AG04449 (cell line): ENCODE measurements at regions of chr6 and their contacts with region 1.

Region 1: GRCh38 chr6:127302728-127303660 is 36.3 kb downstream of the RNF146 start:
- DNase-seq: no peak
- H3K4me3 ChIP-seq: no peak overlapping the region
- CTCF ChIP-seq: peak; percentile 53

Region 2: DNA sequence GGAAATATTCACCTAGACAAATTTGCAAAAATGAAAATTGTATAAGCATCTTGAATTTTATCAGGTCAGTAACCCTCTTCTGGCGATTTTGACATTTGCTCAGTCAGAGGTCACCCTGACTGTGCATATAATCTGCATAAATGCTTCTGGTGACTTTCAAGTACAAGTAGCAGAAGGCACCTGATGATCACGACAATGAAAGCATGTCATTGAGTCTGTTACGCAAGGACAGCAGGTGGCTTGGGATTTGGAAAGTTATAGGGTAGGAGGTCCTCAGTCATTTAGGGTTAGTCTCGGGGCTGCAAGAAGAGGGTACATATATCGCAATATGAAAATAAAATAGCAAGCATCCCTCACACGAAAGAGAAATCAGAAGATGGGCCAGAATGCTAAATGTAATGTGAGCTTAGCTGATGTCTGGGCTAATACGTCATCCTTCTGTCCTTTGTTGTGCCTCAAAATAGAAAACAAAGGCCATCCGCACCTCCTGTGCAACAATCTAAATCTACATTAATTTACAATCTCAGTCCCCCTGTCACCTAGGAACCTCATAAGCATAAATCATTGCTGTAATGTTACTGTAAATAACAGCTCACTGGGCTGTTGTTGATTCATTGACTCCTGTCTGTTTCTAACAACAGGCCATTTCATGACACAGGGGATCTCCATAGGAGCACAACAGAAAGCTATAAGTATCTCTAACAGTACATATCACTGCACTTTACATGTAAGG is 339.8 kb before region 1 on chr6:
- CTCF ChIA-PET with region 1: no interaction called
- POLR2A ChIA-PET with region 1: no interaction called
- DNase-seq: no peak
- H3K4me3 ChIP-seq: no peak overlapping the region
- CTCF ChIP-seq: no peak

Region 3: GRCh38 chr6:127317388-127318128 is 14.6 kb after region 1 on chr6:
- CTCF ChIA-PET with region 1: interaction called, 34 read pairs
- POLR2A ChIA-PET with region 1: no interaction called
- DNase-seq: no peak
- H3K4me3 ChIP-seq: no peak overlapping the region
- CTCF ChIP-seq: no peak

Region 4: DNA sequence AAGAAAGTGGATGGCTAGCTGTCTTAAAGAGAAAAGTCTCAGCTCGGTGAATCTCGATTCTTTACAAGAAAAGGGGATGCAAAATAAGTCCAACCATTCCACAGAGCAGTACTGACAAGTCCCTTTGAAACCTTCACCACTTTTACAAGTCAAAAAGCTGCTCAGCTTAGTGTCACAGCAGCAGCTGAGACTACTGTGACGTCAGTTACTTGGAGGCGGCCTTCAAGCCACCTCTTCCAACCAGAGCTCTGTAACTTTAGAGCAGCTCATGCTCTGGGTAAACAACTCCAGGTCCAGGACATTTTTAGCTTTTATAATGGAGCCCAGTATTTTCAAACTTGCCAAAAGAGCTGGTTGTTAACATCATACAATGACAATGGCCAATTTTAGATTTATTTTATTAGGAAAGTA is 156.2 kb after region 1 on chr6 and contains the start of gene KIAA0408:
- CTCF ChIA-PET with region 1: interaction called, 22 read pairs
- POLR2A ChIA-PET with region 1: no interaction called
- DNase-seq: peak; percentile 36
- H3K4me3 ChIP-seq: peak within 1 kb of the TSS; percentile 9
- CTCF ChIP-seq: no peak

Region 5: DNA sequence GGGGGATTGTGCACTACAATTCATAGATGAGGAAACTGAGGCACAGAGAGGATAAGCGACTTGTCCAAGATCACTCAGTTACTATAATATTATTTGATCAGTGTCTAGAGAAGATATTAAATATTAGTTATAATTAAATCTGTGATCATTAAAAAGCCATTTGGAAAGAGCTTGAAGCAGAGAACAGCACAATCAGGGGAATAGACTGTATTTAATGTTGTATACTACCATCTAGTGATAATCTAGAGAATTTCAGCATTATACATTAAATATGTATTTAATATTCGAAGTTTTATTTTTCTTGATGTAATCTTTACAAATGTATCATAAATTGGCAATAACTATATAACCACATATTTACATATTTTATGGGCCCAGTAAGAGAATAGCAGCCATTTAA is 236.3 kb after region 1 on chr6:
- CTCF ChIA-PET with region 1: interaction called, 136 read pairs
- POLR2A ChIA-PET with region 1: no interaction called
- DNase-seq: no peak
- H3K4me3 ChIP-seq: no peak overlapping the region
- CTCF ChIP-seq: no peak